PC-9 (cell line): ENCODE measurements at regions of chr2 and their contacts with region 1.

Region 1: DNA sequence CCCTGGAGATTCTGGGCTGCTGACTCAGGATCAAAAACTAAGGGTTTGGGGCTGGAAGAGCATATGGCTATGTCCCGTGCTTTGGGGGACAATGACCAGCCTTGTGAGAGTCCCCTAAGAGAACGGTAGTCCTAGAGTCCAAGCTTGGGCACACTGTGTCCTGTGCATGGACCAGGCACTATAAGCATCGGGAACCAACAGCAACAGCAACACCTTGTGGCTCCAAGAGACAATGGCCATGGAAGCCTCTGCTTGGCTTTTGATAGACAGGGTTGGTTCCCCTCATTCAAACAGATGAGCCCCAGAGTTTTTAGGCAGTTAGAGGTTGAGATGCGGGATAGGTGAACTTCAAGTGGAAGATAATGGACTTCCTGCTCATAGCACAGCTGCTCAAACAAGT is 294.4 kb upstream of the CHAC2 start:
- DNase-seq: no peak
- H3K4me3 ChIP-seq: no peak overlapping the region
- H3K27ac ChIP-seq: no peak overlapping the region
- H3K4me1 ChIP-seq: peaks cover 43% of the 10 kb centered on the region
- H3K27me3 ChIP-seq: no peaks in the 10 kb centered on the region
- CTCF ChIP-seq: 0 out of 2 replicates have a peak, but pooled peaks have one; percentile 22

Region 2: GRCh38 chr2:53286345-53286744 is 186.9 kb before region 1 on chr2:
- CTCF ChIA-PET with region 1: no interaction called
- POLR2A ChIA-PET with region 1: interaction called, 3 read pairs
- intact Hi-C with region 1: loop called (anchors 5 kb)
- DNase-seq: no peak
- H3K4me3 ChIP-seq: no peak overlapping the region
- H3K27ac ChIP-seq: no peak overlapping the region
- H3K4me1 ChIP-seq: peaks cover 17% of the 10 kb centered on the region; the same call in 1 of the 2 replicates
- H3K27me3 ChIP-seq: no peaks in the 10 kb centered on the region
- CTCF ChIP-seq: no peak

Region 3: GRCh38 chr2:53312721-53313120 is 160.5 kb before region 1 on chr2:
- CTCF ChIA-PET with region 1: interaction called, 4 read pairs
- POLR2A ChIA-PET with region 1: no interaction called
- intact Hi-C with region 1: loop called (anchors 5 kb)
- DNase-seq: no peak
- H3K4me3 ChIP-seq: no peak overlapping the region
- H3K27ac ChIP-seq: peak overlapping the region; percentile 51
- H3K4me1 ChIP-seq: peaks cover 11% of the 10 kb centered on the region
- H3K27me3 ChIP-seq: no peaks in the 10 kb centered on the region
- CTCF ChIP-seq: no peak

Region 4: GRCh38 chr2:53403792-53404413 is 69.3 kb before region 1 on chr2:
- CTCF ChIA-PET with region 1: no interaction called
- POLR2A ChIA-PET with region 1: no interaction called
- intact Hi-C with region 1: loop called (anchors 5 kb)
- DNase-seq: peak; percentile 25 to 83
- H3K4me3 ChIP-seq: no peak overlapping the region
- H3K27ac ChIP-seq: peak overlapping the region; percentile 92
- H3K4me1 ChIP-seq: peaks cover 29% of the 10 kb centered on the region
- H3K27me3 ChIP-seq: no peaks in the 10 kb centered on the region
- CTCF ChIP-seq: no peak

Region 5: DNA sequence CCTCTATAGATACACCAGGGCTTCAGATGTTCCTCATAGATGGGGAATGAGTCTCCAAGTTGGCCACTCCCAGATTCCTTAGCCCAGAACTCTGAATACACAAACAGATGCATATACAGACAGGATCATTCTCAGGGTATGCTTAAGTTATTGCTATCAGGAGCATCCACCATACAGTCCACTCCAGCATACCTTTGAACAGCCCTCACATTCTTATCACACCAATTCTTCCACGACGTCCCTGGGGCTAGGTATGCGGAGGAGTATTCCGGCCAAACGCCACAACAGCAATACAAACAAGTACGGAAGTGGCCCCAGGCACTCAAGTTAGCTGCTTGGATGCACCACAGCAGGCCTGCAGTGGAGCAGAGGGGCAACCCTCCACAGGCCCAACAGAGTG is 18.2 kb before region 1 on chr2:
- CTCF ChIA-PET with region 1: no interaction called
- POLR2A ChIA-PET with region 1: no interaction called
- intact Hi-C with region 1: loop called (anchors 1 kb)
- DNase-seq: peak; percentile 47 to 65
- H3K4me3 ChIP-seq: no peak overlapping the region
- H3K27ac ChIP-seq: no peak overlapping the region
- H3K4me1 ChIP-seq: no peaks in the 10 kb centered on the region
- H3K27me3 ChIP-seq: no peaks in the 10 kb centered on the region
- CTCF ChIP-seq: no peak

Region 6: GRCh38 chr2:53505814-53506213 is 32.6 kb after region 1 on chr2:
- CTCF ChIA-PET with region 1: no interaction called
- POLR2A ChIA-PET with region 1: no interaction called
- intact Hi-C with region 1: loop called (anchors 1 kb)
- DNase-seq: peak; percentile 46 to 71
- H3K4me3 ChIP-seq: no peak overlapping the region
- H3K27ac ChIP-seq: no peak overlapping the region
- H3K4me1 ChIP-seq: peaks cover 10% of the 10 kb centered on the region
- H3K27me3 ChIP-seq: no peaks in the 10 kb centered on the region
- CTCF ChIP-seq: no peak